Natural killer cell (primary cell): ENCODE measurements at regions of chr11 and their contacts with region 1.

Region 1: GRCh38 chr11:17230867-17231851 is 23.4 kb upstream of the PIK3C2A start:
- DNase-seq: peak in 1 of 2 donors; percentile 58
- ATAC-seq: peak; percentile 38 to 67 (median 48)
- H3K4me3 ChIP-seq: no peak overlapping the region
- H3K4me3 Mint-ChIP-seq: no peak overlapping the region
- H3K27ac ChIP-seq: no peak overlapping the region
- H3K27ac Mint-ChIP-seq: no peak overlapping the region
- H3K4me1 ChIP-seq: peaks cover 5% of the 10 kb centered on the region
- H3K4me1 Mint-ChIP-seq: peaks cover 6 to 12% of the 10 kb centered on the region in 2 donors
- H3K27me3 ChIP-seq: no peaks in the 10 kb centered on the region
- H3K27me3 Mint-ChIP-seq: no peaks in the 10 kb centered on the region
- CTCF ChIP-seq: no peak

Region 2: GRCh38 chr11:16749666-16750065 is 481.5 kb before region 1 on chr11:
- intact Hi-C with region 1: no loop called
- DNase-seq: no peak
- ATAC-seq: no peak
- H3K4me3 ChIP-seq: no peak overlapping the region
- H3K4me3 Mint-ChIP-seq: no peak overlapping the region
- H3K27ac ChIP-seq: no peak overlapping the region
- H3K27ac Mint-ChIP-seq: no peak overlapping the region
- H3K4me1 ChIP-seq: no peaks in the 10 kb centered on the region
- H3K4me1 Mint-ChIP-seq: peaks cover 22 to 30% of the 10 kb centered on the region in 2 donors
- H3K27me3 ChIP-seq: no peaks in the 10 kb centered on the region
- H3K27me3 Mint-ChIP-seq: no peaks in the 10 kb centered on the region
- CTCF ChIP-seq: no peak

Region 3: GRCh38 chr11:17276236-17277023 is 45.3 kb after region 1 on chr11 and contains the start of gene NUCB2:
- intact Hi-C with region 1: loop called (anchors 5 kb)
- DNase-seq: peak; percentile 96 to 97
- ATAC-seq: peak; percentile 92 to 98 (median 96)
- H3K4me3 ChIP-seq: peak within 1 kb of the TSS; percentile 70
- H3K4me3 Mint-ChIP-seq: peak within 1 kb of the TSS; percentile 81
- H3K27ac ChIP-seq: peak within 1 kb of the TSS; percentile 81
- H3K27ac Mint-ChIP-seq: peak within 1 kb of the TSS; percentile 80 to 98
- H3K4me1 ChIP-seq: peaks cover 17% of the 10 kb centered on the region
- H3K4me1 Mint-ChIP-seq: peaks cover 28 to 29% of the 10 kb centered on the region in 2 donors
- H3K27me3 ChIP-seq: no peaks in the 10 kb centered on the region
- H3K27me3 Mint-ChIP-seq: no peaks in the 10 kb centered on the region
- CTCF ChIP-seq: no peak
- total RNA-seq, gene NUCB2: 70.7 to 101 (median 81.4) TPM

Region 4: GRCh38 chr11:17354601-17354991 is 123.4 kb after region 1 on chr11:
- intact Hi-C with region 1: loop called (anchors 10 kb)
- DNase-seq: peak; percentile 32 to 82
- ATAC-seq: peak; percentile 28 to 54 (median 30)
- H3K4me3 ChIP-seq: no peak overlapping the region
- H3K4me3 Mint-ChIP-seq: peak overlapping the region; percentile 93
- H3K27ac ChIP-seq: no peak overlapping the region
- H3K27ac Mint-ChIP-seq: peak overlapping the region; percentile 88
- H3K4me1 ChIP-seq: peaks cover 20% of the 10 kb centered on the region
- H3K4me1 Mint-ChIP-seq: peaks cover 36 to 38% of the 10 kb centered on the region in 2 donors
- H3K27me3 ChIP-seq: no peaks in the 10 kb centered on the region
- H3K27me3 Mint-ChIP-seq: no peaks in the 10 kb centered on the region
- CTCF ChIP-seq: peak; percentile 80

Region 5: GRCh38 chr11:17384002-17384511 is 152.9 kb after region 1 on chr11:
- intact Hi-C with region 1: loop called (anchors 1 kb)
- DNase-seq: peak; percentile 72 to 92
- ATAC-seq: peak; percentile 64 to 79 (median 77)
- H3K4me3 ChIP-seq: no peak overlapping the region
- H3K4me3 Mint-ChIP-seq: no peak overlapping the region
- H3K27ac ChIP-seq: no peak overlapping the region
- H3K27ac Mint-ChIP-seq: no peak overlapping the region
- H3K4me1 ChIP-seq: peaks cover 5% of the 10 kb centered on the region
- H3K4me1 Mint-ChIP-seq: peaks cover 9 to 11% of the 10 kb centered on the region in 2 donors
- H3K27me3 ChIP-seq: no peaks in the 10 kb centered on the region
- H3K27me3 Mint-ChIP-seq: no peaks in the 10 kb centered on the region
- CTCF ChIP-seq: peak; percentile 97

Region 6: DNA sequence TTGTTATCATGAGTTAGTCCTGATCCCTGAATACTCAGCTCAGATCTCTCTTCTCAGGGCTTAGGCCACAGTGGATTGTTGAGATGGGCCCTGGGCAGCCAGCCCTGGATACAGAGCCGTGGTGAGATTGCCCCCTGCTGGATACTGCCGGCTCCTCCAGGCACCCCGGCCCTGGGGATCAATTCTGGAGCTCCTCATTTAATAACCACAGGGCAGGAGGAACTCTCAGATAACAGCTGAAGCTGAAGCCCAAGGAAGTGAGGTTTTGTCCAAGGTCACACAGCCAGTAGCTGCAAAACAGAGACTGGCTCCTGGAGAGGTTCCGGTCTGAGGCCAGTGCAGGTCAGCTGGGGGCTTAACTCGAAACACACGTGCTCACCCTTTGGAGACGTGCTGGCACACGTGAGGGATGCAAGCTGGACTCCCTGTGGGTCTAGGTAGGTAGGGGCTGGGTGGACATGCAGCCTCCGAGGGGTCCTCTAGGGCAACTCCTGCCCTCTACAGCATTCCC is 297.1 kb after region 1 on chr11:
- intact Hi-C with region 1: loop called (anchors 1 kb)
- DNase-seq: peak; percentile 22 to 56
- ATAC-seq: peak in 2 of 3 donors; percentile 57 to 70
- H3K4me3 ChIP-seq: no peak overlapping the region
- H3K4me3 Mint-ChIP-seq: no peak overlapping the region
- H3K27ac ChIP-seq: no peak overlapping the region
- H3K27ac Mint-ChIP-seq: no peak overlapping the region
- H3K4me1 ChIP-seq: no peaks in the 10 kb centered on the region
- H3K4me1 Mint-ChIP-seq: no peaks in the 10 kb centered on the region
- H3K27me3 ChIP-seq: no peaks in the 10 kb centered on the region
- H3K27me3 Mint-ChIP-seq: peaks cover 5 to 7% of the 10 kb centered on the region in 2 donors
- CTCF ChIP-seq: peak; percentile 26

Region 7: DNA sequence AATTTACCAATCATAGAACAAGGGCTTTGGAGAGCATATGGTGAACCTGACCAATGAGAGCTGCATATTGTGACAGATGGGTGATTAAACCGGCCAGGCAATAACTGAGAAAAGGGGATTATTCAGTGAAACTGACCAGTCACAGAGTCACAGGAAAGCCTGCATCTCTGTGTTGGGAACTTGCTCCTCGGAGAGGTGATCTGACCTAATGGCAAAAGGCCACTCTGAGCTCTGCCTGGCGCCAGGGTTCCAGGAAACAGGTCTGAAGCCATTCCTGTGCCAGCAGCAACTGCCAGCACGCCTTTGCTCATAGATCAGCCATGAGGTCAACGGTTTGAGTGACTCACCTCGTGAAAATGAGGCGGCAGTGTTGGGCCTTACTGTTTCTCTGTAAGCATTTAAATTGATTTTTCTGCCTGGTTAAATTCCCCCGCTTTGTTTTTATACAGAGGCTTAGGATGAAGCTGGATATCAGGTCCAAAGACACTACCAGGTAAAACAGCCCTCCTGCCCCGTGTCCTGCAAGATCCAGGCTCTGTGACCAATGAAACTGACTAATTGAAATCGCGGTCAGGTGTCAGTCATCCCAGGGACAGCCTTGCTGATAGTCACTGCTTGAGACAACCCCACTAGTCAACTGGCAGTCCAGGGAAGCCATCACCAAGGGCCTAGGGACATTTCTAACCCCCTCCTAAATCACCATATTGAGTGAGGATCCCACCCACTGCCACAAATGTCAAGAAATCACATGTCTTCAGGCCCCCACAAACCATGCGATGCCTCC is 452.4 kb after region 1 on chr11:
- intact Hi-C with region 1: loop called (anchors 5 kb)
- DNase-seq: no peak
- ATAC-seq: no peak
- H3K4me3 ChIP-seq: no peak overlapping the region
- H3K4me3 Mint-ChIP-seq: no peak overlapping the region
- H3K27ac ChIP-seq: no peak overlapping the region
- H3K27ac Mint-ChIP-seq: no peak overlapping the region
- H3K4me1 ChIP-seq: no peaks in the 10 kb centered on the region
- H3K4me1 Mint-ChIP-seq: no peaks in the 10 kb centered on the region
- H3K27me3 ChIP-seq: no peaks in the 10 kb centered on the region
- H3K27me3 Mint-ChIP-seq: peaks cover 16 to 56% of the 10 kb centered on the region in 2 donors
- CTCF ChIP-seq: no peak